ENCODE measurements at regions of chr10 and their contacts with region 1.

Region 1: GRCh38 chr10:26725837-26726727 is 28.6 kb downstream of the PDSS1 start:
- DNase-seq: peak; percentile 77 to 86
- ATAC-seq: peak; percentile 82
- H3K4me3 ChIP-seq: no peak overlapping the region
- H3K27ac ChIP-seq: no peak overlapping the region
- H3K4me1 ChIP-seq: no peaks in the 10 kb centered on the region
- H3K27me3 ChIP-seq: no peaks in the 10 kb centered on the region

Region 2: DNA sequence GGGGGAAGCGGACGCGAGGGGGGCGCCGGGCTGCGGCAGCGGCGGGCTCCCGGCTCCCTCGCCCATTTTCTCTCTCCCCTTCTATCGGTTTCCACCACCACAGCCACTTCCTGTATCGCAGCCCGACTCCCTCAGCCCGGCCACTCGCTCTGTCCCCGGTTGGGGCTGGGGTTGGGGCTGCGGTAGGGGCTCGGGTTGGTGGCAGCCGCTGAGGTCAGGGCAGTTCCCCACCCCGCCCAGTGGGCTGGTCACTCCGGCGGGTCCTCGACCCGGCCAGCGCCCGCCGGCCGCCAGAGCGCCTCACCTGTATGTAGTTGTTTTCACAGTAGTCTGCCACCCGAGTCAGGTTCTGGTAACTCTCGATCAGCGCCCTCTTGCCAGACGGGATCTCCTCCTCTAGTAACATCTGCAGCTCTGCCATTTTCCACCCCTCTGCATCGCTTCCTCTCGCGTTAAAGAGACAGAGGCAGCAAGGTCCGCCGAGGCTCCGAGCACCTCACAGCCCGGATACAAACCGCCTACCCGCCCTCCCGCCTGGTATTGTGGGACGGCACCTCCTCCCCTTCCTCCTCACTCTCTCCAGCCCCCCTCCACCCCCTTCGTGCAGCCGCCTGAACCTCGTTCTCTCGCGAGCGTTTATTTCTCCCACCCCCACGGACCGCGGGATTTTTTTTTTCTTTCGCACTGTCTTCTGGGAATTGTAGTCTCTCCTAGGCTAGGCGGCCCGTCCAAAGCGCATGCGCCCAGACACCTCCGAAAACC is 134.5 kb after region 1 on chr10 and contains the start of gene ABI1:
- intact Hi-C with region 1: loop called in 1 of 2 experiments (anchors 5 kb)
- DNase-seq: peak; percentile 99
- ATAC-seq: peak; percentile 99
- H3K4me3 ChIP-seq: peak within 1 kb of the TSS; percentile 89 to 93
- H3K27ac ChIP-seq: peak within 1 kb of the TSS; percentile 69 to 85
- H3K4me1 ChIP-seq: peaks cover 2 to 3% of the 10 kb centered on the region in 2 donors
- H3K27me3 ChIP-seq: no peaks in the 10 kb centered on the region
- total RNA-seq, gene ABI1: 50.2 to 60.3 TPM

Region 3: GRCh38 chr10:26881600-26882331 is 155.7 kb after region 1 on chr10:
- intact Hi-C with region 1: loop called (anchors 1 to 2 kb)
- DNase-seq: no peak
- ATAC-seq: peak; percentile 77
- H3K4me3 ChIP-seq: no peak overlapping the region
- H3K27ac ChIP-seq: no peak overlapping the region
- H3K4me1 ChIP-seq: no peaks in the 10 kb centered on the region
- H3K27me3 ChIP-seq: no peaks in the 10 kb centered on the region